A673 (cell line): ENCODE measurements at regions of chr4 and their contacts with region 1.

Region 1: DNA sequence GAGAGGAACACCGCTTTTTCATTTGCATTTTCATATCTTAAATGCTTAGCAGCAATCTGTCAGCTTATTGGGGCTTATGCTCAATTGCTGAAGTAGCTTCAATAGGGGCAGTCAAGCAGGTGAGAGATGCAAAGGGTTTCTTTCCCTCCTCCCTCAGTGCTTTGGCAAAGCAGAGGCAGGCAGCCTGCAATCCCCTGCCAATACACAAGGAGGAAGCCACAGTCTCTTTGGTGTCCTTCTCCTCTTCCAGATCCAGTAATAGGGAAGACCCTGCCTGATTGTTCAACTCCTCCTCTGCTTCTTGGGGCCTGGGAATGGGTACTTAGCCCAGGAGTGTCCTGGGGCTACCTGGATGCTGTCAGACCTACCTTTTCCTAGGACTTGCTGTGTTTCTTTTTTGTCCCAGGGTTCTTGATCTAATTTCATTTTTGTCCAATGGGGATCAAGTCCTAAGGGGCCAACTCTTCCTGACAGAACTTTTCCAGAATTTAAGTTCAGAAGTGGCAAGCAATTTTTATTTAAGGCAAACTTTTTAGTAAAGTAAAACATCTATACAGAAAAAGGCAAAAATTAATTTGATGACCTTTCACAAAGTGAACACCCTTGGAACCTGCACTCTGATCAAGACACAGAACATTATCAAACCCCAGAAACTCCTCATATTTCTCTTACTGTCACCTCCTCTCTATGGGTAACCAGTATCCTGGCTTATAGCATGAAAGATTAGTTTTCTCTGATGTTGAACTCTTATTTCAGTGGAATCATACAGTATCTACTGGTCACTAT is 260.3 kb downstream of the PPP3CA start:
- DNase-seq: peak; percentile 22
- H3K4me3 ChIP-seq: no peak overlapping the region
- H3K27ac ChIP-seq: no peak overlapping the region
- H3K4me1 ChIP-seq: no peaks in the 10 kb centered on the region
- H3K27me3 ChIP-seq: no peaks in the 10 kb centered on the region
- CTCF ChIP-seq: peak; percentile 32; the same call in 1 of the 2 replicates

Region 2: DNA sequence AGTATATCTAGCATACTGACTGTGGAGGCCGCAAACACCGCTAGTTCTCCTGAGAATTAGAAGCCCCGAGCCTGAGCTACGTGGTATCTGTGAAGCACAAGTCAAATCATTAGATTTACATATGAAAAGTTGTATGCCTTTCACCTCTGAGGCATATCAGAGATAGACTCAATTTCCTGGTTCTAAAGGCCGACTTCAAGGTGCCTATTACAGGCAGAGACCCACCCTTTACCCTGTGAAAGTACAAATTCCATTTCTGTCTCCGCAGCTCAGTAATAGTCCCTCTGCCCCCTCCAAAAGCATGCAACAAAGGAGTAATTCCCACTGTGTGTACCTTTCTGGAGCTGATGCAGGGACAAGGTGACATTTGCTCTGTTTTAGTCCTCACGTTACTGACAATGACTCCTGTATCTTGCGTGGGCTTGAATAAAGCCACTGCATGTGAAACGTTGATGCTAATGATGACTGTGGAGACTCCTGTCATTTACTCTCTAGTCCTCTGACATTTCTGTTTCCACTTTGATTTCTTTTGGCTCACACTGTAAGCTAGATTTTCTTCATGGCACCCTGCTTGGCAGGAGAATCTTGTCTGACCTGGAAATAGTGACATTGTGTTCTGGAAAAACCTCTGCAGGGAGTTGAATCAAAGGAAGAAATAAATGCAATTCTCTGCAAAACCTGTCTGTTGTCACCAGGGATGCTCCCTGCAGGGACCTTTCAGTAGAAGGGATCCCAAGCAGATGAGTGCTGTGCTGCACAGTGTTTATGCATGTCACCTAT is 296.0 kb before region 1 on chr4:
- CTCF ChIA-PET with region 1: no interaction called
- POLR2A ChIA-PET with region 1: no interaction called
- intact Hi-C with region 1: no loop called
- DNase-seq: no peak
- H3K4me3 ChIP-seq: no peak overlapping the region
- H3K27ac ChIP-seq: no peak overlapping the region
- H3K4me1 ChIP-seq: no peaks in the 10 kb centered on the region
- H3K27me3 ChIP-seq: no peaks in the 10 kb centered on the region
- CTCF ChIP-seq: no peak

Region 3: DNA sequence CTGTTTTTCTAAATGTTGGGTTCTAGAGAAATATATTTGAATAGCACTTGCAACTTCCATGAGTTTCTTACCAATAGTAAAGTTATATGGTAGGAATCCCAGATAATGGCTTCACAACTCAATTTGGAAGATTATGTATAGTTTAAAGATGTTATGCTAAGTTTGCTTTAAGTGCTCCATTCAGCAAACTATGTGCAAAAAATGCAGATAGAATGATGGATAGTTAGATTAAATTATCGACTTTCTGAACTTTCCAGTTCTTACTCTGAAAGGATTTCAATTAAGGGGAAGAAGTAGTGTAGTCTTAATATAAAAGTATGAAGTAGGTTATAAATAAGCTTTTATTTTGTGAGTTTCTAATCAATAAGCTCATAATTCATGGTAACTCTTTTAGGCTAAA is 1353.5 kb after region 1 on chr4:
- CTCF ChIA-PET with region 1: no interaction called
- POLR2A ChIA-PET with region 1: interaction called, 12 read pairs
- intact Hi-C with region 1: no loop called
- DNase-seq: no peak
- H3K4me3 ChIP-seq: no peak overlapping the region
- H3K27ac ChIP-seq: no peak overlapping the region
- H3K4me1 ChIP-seq: peaks cover 20% of the 10 kb centered on the region
- H3K27me3 ChIP-seq: no peaks in the 10 kb centered on the region
- CTCF ChIP-seq: no peak